Panc1 (cell line): ENCODE measurements at regions of chr2 and their contacts with region 1.

Region 1: GRCh38 chr2:16608661-16609643 is 56.7 kb downstream of the CYRIA start:
- DNase-seq: peak; percentile 50
- ATAC-seq: peak; percentile 91
- H3K4me3 ChIP-seq: peak overlapping the region; percentile 13 to 34; a peak in 3 of 4 replicates
- H3K27ac ChIP-seq: no peak overlapping the region
- H3K4me1 ChIP-seq: no peaks in the 10 kb centered on the region
- H3K27me3 ChIP-seq: peaks cover 10% of the 10 kb centered on the region
- CTCF ChIP-seq: peak; percentile 95

Region 2: DNA sequence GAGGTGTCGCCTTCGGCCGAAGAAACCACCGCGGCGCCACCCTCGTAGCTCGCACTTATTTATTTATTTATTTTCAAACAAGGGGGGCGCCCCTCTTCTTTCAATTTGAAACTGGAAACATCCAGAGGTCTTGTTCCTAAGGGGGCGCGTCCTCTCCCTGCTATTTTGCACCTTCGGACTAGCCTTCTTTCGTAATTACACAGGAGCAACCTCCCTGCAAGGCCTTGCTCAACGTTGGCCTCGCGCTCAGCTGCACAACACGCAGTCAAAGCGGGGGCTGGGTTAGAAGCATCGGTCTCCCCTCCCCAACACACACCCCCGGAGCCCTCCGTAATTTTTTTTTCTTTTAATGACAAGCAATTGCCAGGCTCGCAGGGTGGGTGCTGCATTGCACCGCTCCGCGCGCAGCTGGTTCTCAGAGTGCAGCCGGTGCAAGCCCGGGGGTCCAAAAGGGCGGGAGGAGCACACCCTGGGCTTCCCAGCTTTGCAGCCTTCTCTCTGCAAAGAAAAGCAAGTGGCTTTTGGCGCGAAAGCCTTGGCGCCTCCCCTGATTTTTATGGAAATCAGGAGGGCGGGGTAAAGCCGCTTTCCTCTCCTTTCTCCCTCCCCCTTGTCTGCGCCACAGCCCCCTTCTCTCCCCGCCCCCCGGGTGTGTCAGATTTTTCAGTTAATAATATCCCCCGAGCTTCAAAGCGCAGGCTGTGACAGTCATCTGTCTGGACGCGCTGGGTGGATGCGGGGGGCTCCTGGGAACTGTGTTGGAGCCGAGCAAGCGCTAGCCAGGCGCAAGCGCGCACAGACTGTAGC is 668.9 kb before region 1 on chr2 and contains the start of gene MYCN:
- CTCF ChIA-PET with region 1: no interaction called
- POLR2A ChIA-PET with region 1: no interaction called
- in situ Hi-C with region 1: no loop called
- intact Hi-C with region 1: loop called (anchors 2 kb)
- DNase-seq: no peak
- ATAC-seq: peak; percentile 55
- H3K4me3 ChIP-seq: peak within 1 kb of the TSS; percentile 19 to 46
- H3K27ac ChIP-seq: no peak within 1 kb of the TSS
- H3K4me1 ChIP-seq: peaks cover 12% of the 10 kb centered on the region
- H3K27me3 ChIP-seq: peaks cover 26% of the 10 kb centered on the region
- CTCF ChIP-seq: peak; percentile 88
- total RNA-seq, gene MYCN: not detected

Region 3: DNA sequence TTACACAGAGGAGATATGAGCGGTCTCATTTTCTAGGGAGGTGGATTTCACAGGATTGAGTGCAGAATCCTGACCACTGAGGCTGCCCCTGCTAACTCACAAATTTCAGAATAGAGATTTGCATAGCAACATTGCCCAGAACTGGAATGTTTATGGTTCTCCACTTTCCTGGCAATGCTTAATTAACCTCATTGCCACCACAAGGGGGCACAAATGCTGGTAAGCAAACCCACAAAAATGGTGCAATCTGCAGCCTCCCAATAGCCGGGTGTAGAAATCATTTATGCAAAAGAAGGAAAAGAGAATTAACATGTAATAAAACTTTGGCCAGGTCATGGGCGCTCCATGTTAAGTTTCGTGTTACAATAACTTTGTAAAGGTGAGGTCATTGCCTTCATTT is 55.7 kb before region 1 on chr2:
- CTCF ChIA-PET with region 1: no interaction called
- POLR2A ChIA-PET with region 1: no interaction called
- in situ Hi-C with region 1: no loop called
- intact Hi-C with region 1: loop called (anchors 1 kb)
- DNase-seq: no peak
- ATAC-seq: no peak
- H3K4me3 ChIP-seq: no peak overlapping the region
- H3K27ac ChIP-seq: no peak overlapping the region
- H3K4me1 ChIP-seq: no peaks in the 10 kb centered on the region
- H3K27me3 ChIP-seq: no peaks in the 10 kb centered on the region
- CTCF ChIP-seq: peak; percentile 67

Region 4: GRCh38 chr2:16756831-16757644 is 148.1 kb after region 1 on chr2:
- CTCF ChIA-PET with region 1: interaction called, 5 read pairs
- POLR2A ChIA-PET with region 1: no interaction called
- in situ Hi-C with region 1: no loop called
- intact Hi-C with region 1: loop called (anchors 1 kb)
- DNase-seq: peak; percentile 41
- ATAC-seq: peak; percentile 93
- H3K4me3 ChIP-seq: no peak overlapping the region
- H3K27ac ChIP-seq: no peak overlapping the region
- H3K4me1 ChIP-seq: no peaks in the 10 kb centered on the region
- H3K27me3 ChIP-seq: no peaks in the 10 kb centered on the region; the same call in 1 of the 2 replicates
- CTCF ChIP-seq: peak; percentile 89